ENCODE measurements at regions of chr5 and their contacts with region 1.

Region 1: DNA sequence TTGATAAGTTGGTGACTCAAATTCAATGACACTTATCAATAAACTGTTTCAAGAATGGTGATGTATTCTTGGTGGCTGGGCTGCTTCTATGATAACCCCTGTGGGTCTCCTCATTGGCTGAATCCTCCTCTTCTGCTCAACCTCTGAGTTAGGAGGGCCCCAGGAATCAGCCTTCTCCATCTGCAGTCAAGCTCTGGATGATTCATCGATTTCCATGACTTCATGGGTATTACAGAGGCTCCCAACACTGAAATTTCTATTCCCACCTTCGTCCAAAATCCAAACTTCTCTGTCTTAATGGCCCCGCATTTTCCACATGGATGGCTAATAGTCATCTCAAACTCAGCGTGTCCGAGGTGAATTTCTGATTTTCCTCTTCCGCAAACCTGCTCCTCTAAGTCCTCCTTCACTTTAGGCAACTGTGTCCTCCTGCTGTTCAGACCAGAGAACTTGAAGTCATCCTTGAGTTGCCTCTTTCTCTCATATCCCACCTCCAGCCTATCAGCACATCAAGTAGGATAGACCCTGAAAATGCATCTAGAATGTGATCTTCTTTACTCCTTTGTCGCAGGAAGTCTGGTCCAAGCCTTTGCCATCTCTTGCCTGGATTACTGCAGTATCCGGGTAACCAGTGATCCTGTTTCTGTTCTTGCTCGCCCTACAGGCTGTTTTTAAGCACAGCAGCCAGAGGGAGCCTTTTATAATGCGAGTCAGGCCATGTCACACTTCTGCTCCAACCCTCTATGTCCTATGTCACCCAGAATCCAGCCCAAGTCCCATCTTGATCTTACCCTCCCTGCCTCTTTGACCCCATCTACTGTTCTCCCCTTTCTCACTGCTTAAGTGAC is 41.4 kb upstream of the IL7R start:
- DNase-seq: peak in 2 of 9 donors; percentile 41 to 45
- ATAC-seq: no peak
- H3K4me3 ChIP-seq: peak overlapping the region; percentile 25
- H3K4me3 Mint-ChIP-seq: no peak overlapping the region
- H3K27ac ChIP-seq: peak overlapping the region; percentile 23
- H3K27ac Mint-ChIP-seq: no peak overlapping the region
- H3K4me1 ChIP-seq: peaks cover 67 to 88% of the 10 kb centered on the region in 2 donors
- H3K4me1 Mint-ChIP-seq: peaks cover 25 to 56% (median 43%) of the 10 kb centered on the region in 7 donors
- H3K27me3 ChIP-seq: no peaks in the 10 kb centered on the region
- H3K27me3 Mint-ChIP-seq: no peaks in the 10 kb centered on the region

Region 2: DNA sequence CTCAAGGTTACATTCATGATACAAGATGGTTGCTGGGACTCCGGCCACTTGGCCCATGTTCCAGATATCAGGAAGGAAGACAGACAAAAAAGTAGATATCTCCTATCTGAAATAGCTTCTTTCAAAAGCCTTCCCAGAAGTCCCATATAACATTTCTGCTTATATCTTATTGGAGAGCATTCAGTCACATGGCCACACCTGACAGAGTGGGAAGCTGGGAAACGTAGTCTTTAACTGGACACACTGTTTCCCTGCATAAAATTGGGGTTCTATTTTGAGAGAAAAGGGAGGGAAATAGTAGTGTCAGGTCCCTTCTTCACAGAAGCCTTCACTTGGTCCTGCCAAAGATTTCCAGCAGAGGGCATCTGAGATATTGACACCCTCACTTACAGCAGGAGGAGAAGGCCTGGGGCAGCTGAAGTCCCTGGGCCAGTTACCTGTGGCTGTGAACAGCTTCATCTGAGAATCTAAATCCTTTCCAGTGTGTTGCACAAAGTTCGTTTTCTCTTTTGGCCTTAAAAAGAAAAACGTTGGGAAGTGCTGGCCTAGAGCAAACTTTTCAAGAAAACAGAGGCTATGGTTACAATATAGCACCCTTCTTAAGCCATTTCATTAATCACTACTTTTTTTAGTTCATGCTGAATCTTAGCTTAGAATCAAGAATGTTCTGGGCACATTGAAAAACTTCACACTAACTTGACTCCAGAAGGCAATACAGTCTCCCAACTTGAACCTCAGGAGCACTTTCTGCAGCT is 164.1 kb before region 1 on chr5:
- CTCF ChIA-PET with region 1: interaction called, 4 read pairs
- POLR2A ChIA-PET with region 1: no interaction called
- intact Hi-C with region 1: loop called in 1 of 2 experiments (anchors 1 kb)
- DNase-seq: peak; percentile 10 to 71 (median 64)
- ATAC-seq: peak; percentile 82
- H3K4me3 ChIP-seq: no peak overlapping the region
- H3K4me3 Mint-ChIP-seq: no peak overlapping the region
- H3K27ac ChIP-seq: no peak overlapping the region
- H3K27ac Mint-ChIP-seq: peak overlapping the region in 5 of 9 donors; percentile 2 to 74 (median 42)
- H3K4me1 ChIP-seq: peaks cover 0 to 6% of the 10 kb centered on the region in 2 donors
- H3K4me1 Mint-ChIP-seq: peaks cover 0 to 16% (median 11%) of the 10 kb centered on the region in 7 donors
- H3K27me3 ChIP-seq: no peaks in the 10 kb centered on the region
- H3K27me3 Mint-ChIP-seq: no peaks in the 10 kb centered on the region

Region 3: DNA sequence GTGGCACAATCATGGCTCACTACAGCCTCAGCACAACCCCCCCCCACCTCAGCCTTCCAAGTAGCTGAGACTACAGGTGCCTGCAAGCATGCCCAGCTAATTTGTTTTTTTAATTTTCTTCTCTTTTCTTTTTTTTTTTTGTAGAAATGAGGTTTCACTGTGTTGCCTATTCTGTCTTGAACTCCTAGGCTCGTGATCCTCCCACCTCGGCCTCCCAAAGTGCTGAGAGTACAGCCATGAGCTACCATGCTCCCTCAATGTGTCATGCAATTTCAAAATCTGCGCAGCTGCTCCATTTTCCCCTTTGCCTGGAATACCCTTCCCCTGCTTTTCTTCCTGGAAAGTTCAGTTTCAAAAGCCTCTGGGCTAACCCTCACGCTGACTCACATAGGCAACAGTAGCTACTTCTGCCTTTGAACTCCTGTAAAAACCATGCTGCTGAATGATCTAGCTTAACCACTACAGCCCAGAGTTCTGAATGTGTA is 29.7 kb before region 1 on chr5:
- CTCF ChIA-PET with region 1: interaction called, 50 read pairs
- POLR2A ChIA-PET with region 1: interaction called, 238 read pairs
- intact Hi-C with region 1: loop called (anchors 1 kb)
- DNase-seq: peak in 1 of 9 donors; percentile 57
- ATAC-seq: peak; percentile 36
- H3K4me3 ChIP-seq: no peak overlapping the region
- H3K4me3 Mint-ChIP-seq: peak overlapping the region; percentile 16 to 68 (median 60)
- H3K27ac ChIP-seq: no peak overlapping the region
- H3K27ac Mint-ChIP-seq: peak overlapping the region; percentile 20 to 89 (median 68)
- H3K4me1 ChIP-seq: peaks cover 38 to 53% of the 10 kb centered on the region in 2 donors
- H3K4me1 Mint-ChIP-seq: peaks cover 29 to 97% (median 88%) of the 10 kb centered on the region in 7 donors
- H3K27me3 ChIP-seq: no peaks in the 10 kb centered on the region
- H3K27me3 Mint-ChIP-seq: no peaks in the 10 kb centered on the region

Region 4: GRCh38 chr5:35803191-35803651 is 12.1 kb before region 1 on chr5:
- CTCF ChIA-PET with region 1: interaction called, 3 read pairs
- POLR2A ChIA-PET with region 1: interaction called, 126 read pairs
- intact Hi-C with region 1: no loop called
- DNase-seq: peak in 3 of 9 donors; percentile 33 to 34 (median 34)
- ATAC-seq: peak; percentile 61
- H3K4me3 ChIP-seq: peak overlapping the region; percentile 0
- H3K4me3 Mint-ChIP-seq: peak overlapping the region; percentile 42 to 72 (median 64)
- H3K27ac ChIP-seq: no peak overlapping the region
- H3K27ac Mint-ChIP-seq: peak overlapping the region; percentile 44 to 89 (median 82)
- H3K4me1 ChIP-seq: peaks cover 36 to 54% of the 10 kb centered on the region in 2 donors
- H3K4me1 Mint-ChIP-seq: peaks cover 31 to 90% (median 82%) of the 10 kb centered on the region in 7 donors
- H3K27me3 ChIP-seq: no peaks in the 10 kb centered on the region
- H3K27me3 Mint-ChIP-seq: no peaks in the 10 kb centered on the region

Region 5: DNA sequence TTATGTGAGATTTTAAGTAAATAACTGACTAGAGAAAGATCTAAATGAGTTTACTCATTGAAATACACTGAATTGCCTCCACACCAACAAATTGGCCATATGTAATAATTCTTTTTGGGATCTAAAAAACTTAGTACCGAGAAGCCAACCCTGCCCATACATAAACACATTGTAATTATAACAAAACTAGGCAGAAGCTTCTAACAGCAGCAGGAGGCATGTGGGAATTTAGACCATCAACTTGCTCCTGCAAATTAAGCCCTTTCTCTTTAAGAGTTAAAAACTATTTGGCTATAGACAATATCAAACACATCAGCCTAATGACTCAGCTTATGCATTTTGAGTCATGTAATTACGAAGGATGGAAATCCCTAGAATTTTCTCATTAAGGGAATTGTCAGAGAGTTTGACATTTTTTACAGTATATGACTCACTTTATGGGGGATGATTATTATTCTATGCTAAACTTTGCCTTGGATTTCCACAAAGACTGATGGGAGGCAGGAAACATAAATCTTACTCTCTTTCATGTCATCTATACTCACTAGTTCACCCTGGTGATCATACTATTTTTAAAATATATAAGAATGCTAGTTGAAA is 42.4 kb after region 1 on chr5:
- CTCF ChIA-PET with region 1: interaction called, 12 read pairs
- POLR2A ChIA-PET with region 1: interaction called, 1,069 read pairs
- intact Hi-C with region 1: loop called (anchors 1 kb)
- DNase-seq: peak in 1 of 9 donors; percentile 41
- ATAC-seq: no peak
- H3K4me3 ChIP-seq: peak overlapping the region; percentile 80
- H3K4me3 Mint-ChIP-seq: peak overlapping the region; percentile 82 to 100 (median 94)
- H3K27ac ChIP-seq: peak overlapping the region; percentile 98
- H3K27ac Mint-ChIP-seq: peak overlapping the region; percentile 96 to 100 (median 99)
- H3K4me1 ChIP-seq: peaks cover 40 to 50% of the 10 kb centered on the region in 2 donors
- H3K4me1 Mint-ChIP-seq: peaks cover 25 to 73% (median 63%) of the 10 kb centered on the region in 7 donors
- H3K27me3 ChIP-seq: no peaks in the 10 kb centered on the region
- H3K27me3 Mint-ChIP-seq: no peaks in the 10 kb centered on the region

Region 6: GRCh38 chr5:36089989-36090564 is 274.8 kb after region 1 on chr5:
- CTCF ChIA-PET with region 1: no interaction called
- POLR2A ChIA-PET with region 1: no interaction called
- intact Hi-C with region 1: no loop called
- DNase-seq: no peak
- ATAC-seq: peak; percentile 38
- H3K4me3 ChIP-seq: no peak overlapping the region
- H3K4me3 Mint-ChIP-seq: no peak overlapping the region
- H3K27ac ChIP-seq: no peak overlapping the region
- H3K27ac Mint-ChIP-seq: no peak overlapping the region
- H3K4me1 ChIP-seq: no peaks in the 10 kb centered on the region
- H3K4me1 Mint-ChIP-seq: no peaks in the 10 kb centered on the region
- H3K27me3 ChIP-seq: no peaks in the 10 kb centered on the region
- H3K27me3 Mint-ChIP-seq: peaks cover 11 to 17% (median 14%) of the 10 kb centered on the region in 5 donors

Region 7: DNA sequence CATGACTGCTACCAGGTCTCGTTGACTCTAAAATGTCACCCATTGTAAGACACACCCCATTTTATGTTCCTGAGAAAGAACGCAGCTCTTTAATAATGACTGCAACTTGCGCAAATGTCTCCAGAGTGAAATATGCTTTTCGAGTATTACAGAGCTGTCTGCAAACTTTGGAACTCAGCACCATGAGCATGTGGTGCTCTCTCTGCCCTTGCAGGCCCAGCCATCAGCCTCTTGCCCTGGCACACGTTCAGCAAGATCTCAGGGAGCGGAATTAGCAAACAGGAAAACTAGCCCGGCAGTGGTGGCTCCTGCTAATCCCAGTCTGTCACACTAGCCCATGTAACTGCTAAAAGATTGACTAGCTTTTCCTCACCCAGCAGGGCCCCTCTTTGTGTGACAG is 676.5 kb after region 1 on chr5:
- CTCF ChIA-PET with region 1: no interaction called
- POLR2A ChIA-PET with region 1: no interaction called
- intact Hi-C with region 1: no loop called
- DNase-seq: no peak
- ATAC-seq: no peak
- H3K4me3 ChIP-seq: no peak overlapping the region
- H3K4me3 Mint-ChIP-seq: no peak overlapping the region
- H3K27ac ChIP-seq: no peak overlapping the region
- H3K27ac Mint-ChIP-seq: no peak overlapping the region
- H3K4me1 ChIP-seq: no peaks in the 10 kb centered on the region
- H3K4me1 Mint-ChIP-seq: no peaks in the 10 kb centered on the region
- H3K27me3 ChIP-seq: no peaks in the 10 kb centered on the region
- H3K27me3 Mint-ChIP-seq: peaks cover 0 to 24% (median 3%) of the 10 kb centered on the region in 5 donors

Measured in naive thymus-derived CD4-positive, alpha-beta T cell (primary cell).